Thyroid gland (tissue), 4 donors: ENCODE measurements at regions of chr7 and their contacts with region 1.

Region 1: GRCh38 chr7:44200647-44201461 is at the start of gene YKT6:
- DNase-seq: peak; percentile 94 to 96
- H3K4me3 ChIP-seq: peak within 1 kb of the TSS; percentile 77 to 100 (median 99)
- H3K27ac ChIP-seq: peak within 1 kb of the TSS in 1 of 3 donors; percentile 52
- H3K4me1 ChIP-seq: peaks cover 13 to 15% of the 10 kb centered on the region in 2 donors
- H3K27me3 ChIP-seq: no peaks in the 10 kb centered on the region
- CTCF ChIP-seq: peak in 5 of 6 experiments; percentile 38 to 74 (median 63)
- POLR2A ChIP-seq: peak in 1 of 2 donors; percentile 76
- total RNA-seq, gene YKT6: 51.7 to 90.0 (median 60.2) TPM

Region 2: GRCh38 chr7:44123190-44124003 is 77.5 kb before region 1 on chr7 and contains the start of gene POLD2:
- intact Hi-C with region 1: loop called (anchors 10 kb)
- DNase-seq: peak; percentile 98 to 99
- H3K4me3 ChIP-seq: peak within 1 kb of the TSS; percentile 41 to 81 (median 69)
- H3K27ac ChIP-seq: peak within 1 kb of the TSS; percentile 13 to 65 (median 41)
- H3K4me1 ChIP-seq: peaks cover 6 to 9% of the 10 kb centered on the region in 2 donors
- H3K27me3 ChIP-seq: no peaks in the 10 kb centered on the region
- CTCF ChIP-seq: peak in 1 of 6 experiments; percentile 17
- POLR2A ChIP-seq: peak in 1 of 2 donors; percentile 69
- total RNA-seq, gene POLD2: 48.8 to 65.8 (median 55.1) TPM